H1 (cell line): ENCODE measurements at regions of chr2 and their contacts with region 1.

Region 1: DNA sequence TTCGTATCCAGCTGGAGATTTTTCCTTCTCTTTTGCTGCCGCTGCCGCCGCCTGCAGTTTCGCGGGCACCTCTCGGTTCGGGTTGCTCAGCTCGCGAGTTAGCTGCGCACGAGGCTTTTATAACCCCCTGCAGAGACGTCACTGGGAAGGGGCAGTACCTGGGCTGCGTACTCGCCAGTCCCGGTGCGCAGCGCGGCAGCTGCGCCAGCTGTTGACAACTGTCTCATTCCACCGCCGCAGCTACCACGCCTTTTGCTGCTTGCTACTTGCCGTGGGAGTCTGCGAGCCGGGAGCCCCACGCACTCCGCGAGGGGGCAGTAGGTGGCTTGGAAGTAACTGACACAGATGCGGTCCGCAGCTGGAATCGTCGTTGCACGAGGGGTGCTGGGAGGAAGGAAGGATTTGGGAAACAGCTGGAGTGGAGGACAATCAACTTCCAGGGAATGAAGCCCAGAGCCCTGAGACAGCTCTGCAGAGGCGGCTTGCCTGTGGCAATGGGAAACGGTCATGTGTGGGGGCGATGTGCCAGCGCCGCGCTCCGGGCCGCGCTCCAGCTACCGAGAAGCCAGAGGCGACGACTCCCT is at the start of gene TACR1:
- DNase-seq: peak in 1 of 2 experiments; percentile 66
- H3K4me3 ChIP-seq: peak within 1 kb of the TSS; percentile 42 to 67 (median 62)
- H3K27ac ChIP-seq: no peak within 1 kb of the TSS
- H3K4me1 ChIP-seq: peaks cover 0 to 12% (median 6%) of the 10 kb centered on the region in 4 experiments; a peak in 5 of 7 replicates
- H3K27me3 ChIP-seq: peaks cover 21 to 56% (median 49%) of the 10 kb centered on the region in 4 experiments
- CTCF ChIP-seq: peak; percentile 31 to 38 (median 35)
- EP300 ChIP-seq: no peak
- POLR2A ChIP-seq: no peak
- RAD21 ChIP-seq: peak; percentile 22 to 42; a peak in 3 of 4 replicates
- total RNA-seq, gene TACR1: 0.19 and 0.37 TPM in 2 replicates

Region 2: GRCh38 chr2:75157430-75157829 is 42.1 kb before region 1 on chr2:
- CTCF ChIA-PET with region 1: interaction called, 16 read pairs
- POLR2A ChIA-PET with region 1: no interaction called
- DNase-seq: no peak
- H3K4me3 ChIP-seq: no peak overlapping the region
- H3K27ac ChIP-seq: no peak overlapping the region
- H3K4me1 ChIP-seq: peaks cover 4 to 10% (median 4%) of the 10 kb centered on the region in 4 experiments; a peak in 6 of 7 replicates
- H3K27me3 ChIP-seq: no peaks in the 10 kb centered on the region
- CTCF ChIP-seq: peak in 2 of 3 experiments; percentile 30 to 41; a peak in 2 of 4 replicates
- EP300 ChIP-seq: no peak
- POLR2A ChIP-seq: no peak
- RAD21 ChIP-seq: peak; percentile 61 to 64

Region 3: DNA sequence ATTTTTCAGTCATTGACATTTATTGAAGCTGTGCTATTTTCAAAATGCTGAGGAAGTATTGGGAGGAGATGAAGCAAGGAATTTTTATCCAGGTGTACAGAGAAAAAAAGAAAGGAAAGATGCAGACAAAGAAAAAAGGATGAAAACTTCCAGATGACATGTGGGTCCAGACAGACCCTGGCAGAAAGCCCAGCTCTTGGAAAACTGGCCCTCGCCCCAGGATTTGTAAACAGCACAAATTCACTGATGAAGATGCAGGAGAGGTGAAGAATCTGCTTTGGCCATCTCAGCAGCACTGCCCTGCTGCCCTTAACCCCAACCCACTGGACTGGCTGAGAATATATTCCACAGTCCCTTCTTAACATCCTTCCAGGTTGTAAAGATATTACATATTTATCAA is 12.7 kb before region 1 on chr2:
- CTCF ChIA-PET with region 1: interaction called, 27 read pairs
- POLR2A ChIA-PET with region 1: no interaction called
- DNase-seq: no peak
- H3K4me3 ChIP-seq: no peak overlapping the region
- H3K27ac ChIP-seq: no peak overlapping the region
- H3K4me1 ChIP-seq: no peaks in the 10 kb centered on the region; a peak in 1 of 7 replicates
- H3K27me3 ChIP-seq: no peaks in the 10 kb centered on the region
- CTCF ChIP-seq: no peak
- EP300 ChIP-seq: no peak
- POLR2A ChIP-seq: no peak
- RAD21 ChIP-seq: no peak

Region 4: GRCh38 chr2:75233965-75234364 is 34.4 kb after region 1 on chr2:
- CTCF ChIA-PET with region 1: no interaction called
- POLR2A ChIA-PET with region 1: no interaction called
- DNase-seq: no peak
- H3K4me3 ChIP-seq: no peak overlapping the region
- H3K27ac ChIP-seq: no peak overlapping the region
- H3K4me1 ChIP-seq: no peaks in the 10 kb centered on the region
- H3K27me3 ChIP-seq: no peaks in the 10 kb centered on the region
- CTCF ChIP-seq: peak in 1 of 3 experiments; percentile 11; a peak in 1 of 4 replicates
- EP300 ChIP-seq: no peak
- POLR2A ChIP-seq: no peak
- RAD21 ChIP-seq: no peak